ENCODE measurements at regions of chr16 and their contacts with region 1.

Region 1: GRCh38 chr16:938136-938795 is 32.5 kb downstream of the LMF1 start:
- DNase-seq: no peak
- ATAC-seq: no peak; the same call in 1 of the 2 replicates
- H3K4me3 ChIP-seq: no peak overlapping the region
- H3K27ac ChIP-seq: no peak overlapping the region
- H3K4me1 ChIP-seq: no peaks in the 10 kb centered on the region
- H3K27me3 ChIP-seq: no peaks in the 10 kb centered on the region
- CTCF ChIP-seq: no peak

Region 2: GRCh38 chr16:974611-975261 is 36.5 kb after region 1 on chr16:
- CTCF ChIA-PET with region 1: interaction called, 3 read pairs
- POLR2A ChIA-PET with region 1: no interaction called
- in situ Hi-C with region 1: loop called (anchors 5 kb)
- intact Hi-C with region 1: no loop called
- DNase-seq: no peak
- ATAC-seq: no peak
- H3K4me3 ChIP-seq: no peak overlapping the region
- H3K27ac ChIP-seq: no peak overlapping the region
- H3K4me1 ChIP-seq: peaks cover 13% of the 10 kb centered on the region
- H3K27me3 ChIP-seq: no peaks in the 10 kb centered on the region
- CTCF ChIP-seq: no peak

Region 3: DNA sequence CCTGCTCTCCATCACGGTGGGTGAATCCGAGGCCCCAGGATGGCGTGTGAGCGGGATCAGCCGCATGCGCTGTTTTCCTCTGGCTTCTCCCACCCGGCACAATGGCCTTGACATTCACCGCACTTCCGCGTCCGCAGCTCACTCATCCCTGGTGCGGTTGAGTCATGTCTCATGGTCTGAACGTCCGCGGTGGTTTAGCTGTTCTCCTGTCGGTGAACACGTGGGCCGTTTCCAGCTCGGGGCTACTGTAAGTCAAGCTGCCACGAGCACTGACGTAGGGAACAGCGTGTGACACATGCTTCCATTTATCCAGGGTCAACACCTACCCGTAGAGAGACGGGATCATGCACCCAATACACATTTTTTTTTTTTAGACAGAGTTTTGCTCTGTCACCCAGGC is 199.3 kb after region 1 on chr16:
- CTCF ChIA-PET with region 1: no interaction called
- POLR2A ChIA-PET with region 1: no interaction called
- in situ Hi-C with region 1: no loop called
- intact Hi-C with region 1: no loop called
- DNase-seq: no peak
- ATAC-seq: no peak
- H3K4me3 ChIP-seq: no peak overlapping the region
- H3K27ac ChIP-seq: no peak overlapping the region
- H3K4me1 ChIP-seq: peaks cover 11% of the 10 kb centered on the region
- H3K27me3 ChIP-seq: no peaks in the 10 kb centered on the region
- CTCF ChIP-seq: no peak

Measured in Panc1 (cell line).